ENCODE measurements at regions of chr12 and their contacts with region 1.

Region 1: DNA sequence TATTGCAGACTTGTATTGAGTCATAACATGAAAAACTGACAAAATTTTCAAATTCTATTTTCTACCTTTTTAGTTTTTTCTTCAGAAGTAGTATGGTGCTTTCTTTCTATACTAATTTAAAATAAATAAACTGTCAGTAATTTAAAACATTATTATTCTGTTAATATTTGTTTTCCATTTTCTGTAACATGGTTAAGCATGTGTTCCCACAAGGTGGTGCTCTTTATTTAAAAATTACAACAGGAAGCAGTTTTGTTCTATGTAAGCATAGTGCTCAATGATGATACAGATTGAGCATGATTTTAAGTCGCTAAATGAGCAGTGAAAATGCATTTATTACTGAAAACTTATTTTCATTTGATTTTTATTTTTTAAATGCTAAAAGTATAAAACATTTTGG is 114.6 kb downstream of the PPFIA2 start:
- DNase-seq: no peak
- H3K4me3 ChIP-seq: no peak overlapping the region
- H3K27ac ChIP-seq: no peak overlapping the region
- H3K4me1 ChIP-seq: no peaks in the 10 kb centered on the region
- H3K27me3 ChIP-seq: no peaks in the 10 kb centered on the region
- CTCF ChIP-seq: peak; percentile 65

Region 2: GRCh38 chr12:81597928-81598604 is 46.4 kb before region 1 on chr12:
- intact Hi-C with region 1: no loop called
- DNase-seq: no peak
- H3K4me3 ChIP-seq: no peak overlapping the region
- H3K27ac ChIP-seq: no peak overlapping the region
- H3K4me1 ChIP-seq: no peaks in the 10 kb centered on the region
- H3K27me3 ChIP-seq: no peaks in the 10 kb centered on the region
- CTCF ChIP-seq: no peak

Region 3: DNA sequence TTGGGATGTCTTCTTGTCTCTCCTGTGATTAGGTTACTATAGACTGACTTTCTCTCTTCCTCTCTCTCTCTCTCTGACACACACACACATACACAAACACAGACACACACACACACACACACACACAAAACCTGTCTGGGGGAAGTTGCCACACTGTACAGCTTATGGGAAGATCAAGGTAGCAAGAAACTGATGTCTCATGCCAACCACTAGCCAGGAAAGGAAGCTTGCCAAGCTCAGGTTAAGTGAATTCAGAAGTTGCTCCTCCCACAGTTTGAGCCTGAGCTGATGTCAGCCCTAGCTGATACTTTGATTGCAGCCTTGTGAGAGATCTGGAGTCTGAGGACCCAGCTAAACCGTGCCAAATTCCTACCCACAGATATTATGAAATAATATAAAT is 47.5 kb after region 1 on chr12:
- intact Hi-C with region 1: no loop called
- DNase-seq: no peak
- H3K4me3 ChIP-seq: no peak overlapping the region
- H3K27ac ChIP-seq: no peak overlapping the region
- H3K4me1 ChIP-seq: no peaks in the 10 kb centered on the region
- H3K27me3 ChIP-seq: no peaks in the 10 kb centered on the region
- CTCF ChIP-seq: no peak

Region 4: GRCh38 chr12:82144505-82144904 is 500.0 kb after region 1 on chr12:
- intact Hi-C with region 1: no loop called
- DNase-seq: no peak
- H3K4me3 ChIP-seq: no peak overlapping the region
- H3K27ac ChIP-seq: no peak overlapping the region
- H3K4me1 ChIP-seq: no peaks in the 10 kb centered on the region
- H3K27me3 ChIP-seq: no peaks in the 10 kb centered on the region
- CTCF ChIP-seq: no peak

Region 5: GRCh38 chr12:82326905-82327503 is 682.5 kb after region 1 on chr12:
- intact Hi-C with region 1: loop called (anchors 10 kb)
- DNase-seq: no peak
- H3K4me3 ChIP-seq: no peak overlapping the region
- H3K27ac ChIP-seq: no peak overlapping the region
- H3K4me1 ChIP-seq: no peaks in the 10 kb centered on the region
- H3K27me3 ChIP-seq: no peaks in the 10 kb centered on the region
- CTCF ChIP-seq: peak; percentile 60

Measured in left ventricle myocardium inferior (tissue), 1 donor.